Activated CD8-positive, alpha-beta T cell treated with anti-CD3 and anti-CD28 coated beads for 36 hours (primary cell): ENCODE measurements at regions of chr10 and their contacts with region 1.

Region 1: GRCh38 chr10:129030996-129031843 is 435.8 kb upstream of the MGMT start:
- DNase-seq: peak; percentile 59
- ATAC-seq: peak; percentile 50
- H3K4me3 Mint-ChIP-seq: no peak overlapping the region
- H3K27ac Mint-ChIP-seq: no peak overlapping the region
- H3K4me1 Mint-ChIP-seq: peaks cover 20% of the 10 kb centered on the region
- H3K27me3 Mint-ChIP-seq: peaks cover 13% of the 10 kb centered on the region
- CTCF ChIP-seq: peak; percentile 93

Region 2: DNA sequence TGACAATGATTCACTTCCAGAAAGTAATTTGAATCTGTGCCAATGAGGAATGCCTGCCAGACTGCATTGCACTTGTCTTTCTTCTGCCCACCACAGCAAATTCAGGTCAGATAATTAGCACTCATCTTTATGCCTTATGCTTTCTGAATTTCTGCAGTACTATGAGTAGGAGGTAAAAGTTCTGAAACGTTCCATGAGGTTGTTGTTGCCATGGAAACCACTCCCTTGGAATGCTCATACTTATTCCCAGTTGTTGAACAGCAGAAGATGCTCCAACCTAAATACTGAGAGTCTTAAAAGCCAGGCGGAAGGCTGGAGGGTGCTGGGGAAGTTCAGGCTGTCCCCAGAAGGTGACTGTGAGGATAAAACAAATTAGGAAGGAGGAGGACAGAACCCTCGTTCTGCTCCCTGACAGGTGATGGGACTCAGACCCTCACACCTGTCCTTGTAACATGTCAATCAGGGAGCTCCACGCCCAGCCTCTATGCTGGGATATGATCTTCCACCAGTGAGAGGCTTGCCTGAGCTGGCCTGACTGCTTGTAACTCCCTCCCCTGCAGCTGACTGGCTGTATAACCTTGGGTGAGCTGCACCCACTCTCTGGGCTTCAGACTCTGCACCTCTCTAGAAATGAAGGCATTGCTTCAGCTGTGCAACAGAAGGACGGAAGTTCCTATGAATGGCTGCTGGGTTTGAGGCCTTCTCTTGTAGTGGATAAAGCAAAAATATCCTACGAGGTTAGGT is 118.5 kb before region 1 on chr10:
- CTCF ChIA-PET with region 1: no interaction called
- POLR2A ChIA-PET with region 1: no interaction called
- intact Hi-C with region 1: no loop called
- DNase-seq: no peak
- ATAC-seq: no peak
- H3K4me3 Mint-ChIP-seq: no peak overlapping the region
- H3K27ac Mint-ChIP-seq: no peak overlapping the region
- H3K4me1 Mint-ChIP-seq: no peaks in the 10 kb centered on the region
- H3K27me3 Mint-ChIP-seq: no peaks in the 10 kb centered on the region
- CTCF ChIP-seq: no peak

Region 3: DNA sequence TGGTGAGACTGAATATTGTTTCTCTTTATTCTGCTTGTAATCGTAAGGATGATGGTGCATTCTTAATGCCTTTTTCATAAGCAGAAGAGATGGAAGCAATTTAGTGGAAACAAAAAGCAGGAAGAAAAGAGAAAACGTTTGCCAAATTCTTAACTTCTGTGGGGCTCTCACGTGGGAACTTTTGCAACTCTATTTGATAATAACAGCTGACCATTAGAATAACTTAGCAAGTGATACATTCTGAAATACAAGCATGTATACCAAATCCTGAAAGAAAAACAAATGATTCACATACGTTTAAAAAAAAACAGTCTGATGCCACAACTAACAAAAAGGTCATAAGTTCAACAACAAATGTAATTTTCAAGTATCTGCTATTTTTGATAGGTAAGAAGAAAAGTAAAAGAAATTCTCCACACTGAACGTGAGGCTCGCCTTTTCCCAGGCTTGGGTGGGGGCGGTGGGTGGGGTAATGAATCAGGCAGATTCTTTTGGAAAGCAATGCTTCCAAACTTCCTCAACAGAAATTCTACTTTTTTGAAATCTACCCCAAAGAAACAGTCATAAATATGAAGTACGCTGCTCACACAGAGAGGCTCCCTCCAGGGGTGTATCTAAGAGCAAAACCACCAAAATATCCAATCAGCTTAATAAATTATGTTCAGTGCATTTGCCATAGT is 10.4 kb before region 1 on chr10:
- CTCF ChIA-PET with region 1: interaction called, 11 read pairs
- POLR2A ChIA-PET with region 1: no interaction called
- intact Hi-C with region 1: no loop called
- DNase-seq: no peak
- ATAC-seq: no peak
- H3K4me3 Mint-ChIP-seq: no peak overlapping the region
- H3K27ac Mint-ChIP-seq: no peak overlapping the region
- H3K4me1 Mint-ChIP-seq: no peaks in the 10 kb centered on the region
- H3K27me3 Mint-ChIP-seq: no peaks in the 10 kb centered on the region
- CTCF ChIP-seq: no peak

Region 4: GRCh38 chr10:129332476-129332875 is 301.3 kb after region 1 on chr10:
- CTCF ChIA-PET with region 1: interaction called, 33 read pairs
- POLR2A ChIA-PET with region 1: no interaction called
- intact Hi-C with region 1: loop called (anchors 2 kb)
- DNase-seq: peak; percentile 39
- ATAC-seq: no peak
- H3K4me3 Mint-ChIP-seq: no peak overlapping the region
- H3K27ac Mint-ChIP-seq: no peak overlapping the region
- H3K4me1 Mint-ChIP-seq: no peaks in the 10 kb centered on the region
- H3K27me3 Mint-ChIP-seq: peaks cover 3% of the 10 kb centered on the region
- CTCF ChIP-seq: peak; percentile 57